ENCODE measurements at regions of chr7 and their contacts with region 1.

Region 1: GRCh38 chr7:16982640-16983350 is 101.0 kb upstream of the AGR3 start:
- DNase-seq: peak; percentile 69
- H3K4me3 ChIP-seq: no peak overlapping the region
- H3K27ac ChIP-seq: no peak overlapping the region
- H3K4me1 ChIP-seq: peaks cover 26% of the 10 kb centered on the region
- H3K27me3 ChIP-seq: no peaks in the 10 kb centered on the region
- CTCF ChIP-seq: peak; percentile 75 to 76
- POLR2A ChIP-seq: no peak

Region 2: GRCh38 chr7:16770662-16771329 is 212.0 kb before region 1 on chr7:
- CTCF ChIA-PET with region 1: no interaction called
- POLR2A ChIA-PET with region 1: no interaction called
- dilution Hi-C with region 1: no loop called
- intact Hi-C with region 1: no loop called
- DNase-seq: no peak
- H3K4me3 ChIP-seq: no peak overlapping the region
- H3K27ac ChIP-seq: no peak overlapping the region
- H3K4me1 ChIP-seq: peaks cover 6% of the 10 kb centered on the region
- H3K27me3 ChIP-seq: no peaks in the 10 kb centered on the region
- CTCF ChIP-seq: no peak
- POLR2A ChIP-seq: no peak

Region 3: DNA sequence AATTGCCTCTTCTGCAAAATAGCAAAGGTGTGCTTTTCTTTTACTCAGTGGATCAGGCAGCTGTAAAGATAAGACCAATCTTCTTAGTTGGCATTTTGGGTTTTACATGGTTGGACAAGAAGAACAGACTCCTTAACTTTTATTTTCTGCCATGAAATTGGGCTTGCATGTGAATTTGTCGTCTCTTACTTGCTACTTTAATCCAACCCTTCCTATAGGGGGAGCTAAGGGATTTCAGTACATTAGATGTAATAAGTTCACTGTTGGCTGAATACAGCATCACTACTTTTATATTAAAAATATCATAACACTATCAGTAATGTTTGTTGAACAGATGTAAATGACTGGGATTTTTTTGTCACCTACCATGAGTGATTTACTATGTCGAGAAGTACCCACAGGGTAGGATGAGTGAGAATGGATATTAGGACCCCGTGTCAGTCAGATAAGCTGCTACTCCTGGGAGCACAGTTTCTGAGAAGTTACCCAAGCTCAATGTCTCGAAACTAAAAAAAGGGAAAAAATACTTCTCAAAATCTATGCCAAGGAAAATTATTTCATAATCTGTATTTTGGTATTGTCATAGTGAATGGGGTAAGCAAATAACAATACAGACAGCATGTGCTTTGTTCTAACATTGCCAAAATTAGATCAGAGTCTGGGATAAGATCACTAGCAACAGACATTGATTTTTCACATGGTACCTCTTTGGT is 26.4 kb after region 1 on chr7:
- CTCF ChIA-PET with region 1: interaction called, 12 read pairs
- POLR2A ChIA-PET with region 1: no interaction called
- dilution Hi-C with region 1: no loop called
- intact Hi-C with region 1: no loop called
- DNase-seq: peak; percentile 43
- H3K4me3 ChIP-seq: no peak overlapping the region
- H3K27ac ChIP-seq: no peak overlapping the region
- H3K4me1 ChIP-seq: peaks cover 3% of the 10 kb centered on the region
- H3K27me3 ChIP-seq: no peaks in the 10 kb centered on the region
- CTCF ChIP-seq: peak in 1 of 2 donors; percentile 21
- POLR2A ChIP-seq: no peak

Region 4: DNA sequence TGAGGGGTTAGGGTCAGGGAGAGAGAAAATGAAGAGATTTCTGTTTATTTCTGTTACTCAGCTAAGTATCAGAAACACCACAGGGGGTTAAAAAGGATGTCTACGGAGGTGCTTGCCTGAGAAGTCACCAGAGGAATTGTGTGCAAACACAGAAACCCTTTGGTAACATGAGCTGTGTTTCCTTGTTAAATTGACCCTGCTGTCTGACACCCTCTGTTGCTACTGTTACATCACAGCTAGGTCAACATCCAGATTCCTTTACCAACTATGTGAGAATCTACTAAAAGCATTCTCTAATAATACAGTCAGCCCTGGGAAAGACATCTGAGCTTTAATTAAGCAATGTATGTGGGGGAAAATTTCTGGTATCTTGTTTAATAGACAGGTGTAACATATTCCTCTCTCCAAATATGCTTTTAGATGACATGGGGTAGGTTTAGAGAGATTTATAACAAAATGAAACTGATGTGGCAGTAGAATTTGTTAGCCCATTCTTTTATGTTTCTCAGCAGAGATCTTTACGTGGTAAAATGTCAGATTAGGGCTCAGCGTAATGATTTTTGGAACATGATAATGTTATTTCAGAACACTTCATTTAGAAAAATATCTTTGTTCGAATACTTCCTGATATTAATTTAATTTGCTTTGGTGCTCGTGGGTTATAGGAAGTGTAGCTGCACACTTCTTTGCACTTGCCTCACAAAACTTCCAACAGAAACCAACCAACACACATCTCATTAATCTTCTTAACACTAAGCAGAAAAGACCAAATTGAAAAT is 147.7 kb after region 1 on chr7:
- CTCF ChIA-PET with region 1: interaction called, 11 read pairs
- POLR2A ChIA-PET with region 1: no interaction called
- dilution Hi-C with region 1: no loop called
- intact Hi-C with region 1: no loop called
- DNase-seq: peak; percentile 81
- H3K4me3 ChIP-seq: peak overlapping the region in 1 of 3 experiments; percentile 8
- H3K27ac ChIP-seq: no peak overlapping the region
- H3K4me1 ChIP-seq: no peaks in the 10 kb centered on the region
- H3K27me3 ChIP-seq: no peaks in the 10 kb centered on the region
- CTCF ChIP-seq: no peak
- POLR2A ChIP-seq: no peak

Region 5: GRCh38 chr7:17171427-17171826 is 188.6 kb after region 1 on chr7:
- CTCF ChIA-PET with region 1: no interaction called
- POLR2A ChIA-PET with region 1: no interaction called
- dilution Hi-C with region 1: no loop called
- intact Hi-C with region 1: no loop called
- DNase-seq: no peak
- H3K4me3 ChIP-seq: no peak overlapping the region
- H3K27ac ChIP-seq: no peak overlapping the region
- H3K4me1 ChIP-seq: no peaks in the 10 kb centered on the region
- H3K27me3 ChIP-seq: no peaks in the 10 kb centered on the region
- CTCF ChIP-seq: no peak
- POLR2A ChIP-seq: no peak

Region 6: DNA sequence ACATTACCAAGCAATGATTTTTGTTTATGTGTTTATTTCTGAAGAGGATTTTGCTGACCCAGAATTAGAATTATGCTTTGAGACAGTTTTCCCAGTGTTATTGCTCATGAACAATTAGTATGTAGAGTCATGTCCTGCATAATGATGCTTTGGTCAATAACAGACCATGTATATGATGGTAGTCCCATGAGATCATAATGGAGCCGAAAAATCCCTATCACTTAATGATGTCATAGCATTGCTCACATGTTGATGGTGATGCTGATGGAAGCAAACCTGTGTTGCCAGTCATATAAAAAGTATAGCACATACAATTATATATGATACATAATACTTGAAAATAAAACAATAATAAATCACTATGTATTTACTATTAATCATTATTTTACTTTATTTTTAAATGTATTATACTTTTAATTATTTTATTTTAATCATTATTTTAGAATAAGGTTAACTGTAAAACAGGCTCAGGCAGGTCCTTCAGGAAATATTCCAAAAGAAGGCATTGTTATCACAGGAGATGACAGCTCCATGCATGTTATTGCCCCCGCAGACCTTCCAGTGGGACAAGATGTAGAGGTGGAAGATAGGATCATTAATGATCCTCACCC is 349.2 kb after region 1 on chr7:
- CTCF ChIA-PET with region 1: interaction called, 11 read pairs
- POLR2A ChIA-PET with region 1: no interaction called
- dilution Hi-C with region 1: no loop called
- intact Hi-C with region 1: no loop called
- DNase-seq: no peak
- H3K4me3 ChIP-seq: no peak overlapping the region
- H3K27ac ChIP-seq: no peak overlapping the region
- H3K4me1 ChIP-seq: no peaks in the 10 kb centered on the region
- H3K27me3 ChIP-seq: no peaks in the 10 kb centered on the region
- CTCF ChIP-seq: no peak
- POLR2A ChIP-seq: no peak

Region 7: DNA sequence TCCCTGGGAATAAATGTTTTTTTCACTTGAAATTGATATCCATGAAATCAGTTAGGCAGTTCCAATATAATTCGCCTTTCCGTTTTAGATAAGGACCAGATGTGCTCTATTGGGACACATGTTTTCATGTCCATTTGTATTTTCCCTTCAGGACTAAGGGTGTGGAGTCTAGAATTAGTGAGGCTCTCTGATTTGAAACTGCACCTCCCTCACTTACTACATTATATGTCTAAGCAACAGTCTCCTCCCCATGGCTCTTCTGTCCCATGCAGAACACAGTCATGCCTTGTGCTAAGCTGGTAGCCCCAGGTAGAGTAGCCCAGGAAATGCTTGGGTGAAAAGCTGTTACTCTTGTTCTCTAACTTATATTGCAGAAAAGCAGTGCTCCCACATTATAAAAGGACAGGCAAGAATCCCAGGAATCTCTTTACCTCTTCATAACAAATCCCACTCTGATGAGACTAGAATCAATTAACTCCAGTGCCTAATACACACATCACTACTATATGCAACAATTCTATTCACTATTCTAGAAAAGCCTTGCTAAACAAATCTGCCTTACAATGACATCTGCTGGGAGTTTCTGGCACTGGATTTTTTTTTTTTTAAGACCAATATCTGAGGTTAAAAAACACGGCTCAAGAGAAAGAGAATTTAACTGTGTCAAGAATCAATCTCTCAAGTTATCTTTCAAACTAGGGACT is 663.6 kb after region 1 on chr7:
- CTCF ChIA-PET with region 1: interaction called, 22 read pairs
- POLR2A ChIA-PET with region 1: no interaction called
- dilution Hi-C with region 1: no loop called
- intact Hi-C with region 1: loop called (anchors 1 kb)
- DNase-seq: peak; percentile 38
- H3K4me3 ChIP-seq: no peak overlapping the region
- H3K27ac ChIP-seq: no peak overlapping the region
- H3K4me1 ChIP-seq: no peaks in the 10 kb centered on the region
- H3K27me3 ChIP-seq: no peaks in the 10 kb centered on the region
- CTCF ChIP-seq: peak in 1 of 2 donors; percentile 17
- POLR2A ChIP-seq: no peak